Activated B cell treated with CpG ODN at 0.5 μM for 24 hours (primary cell): ENCODE measurements at regions of chr10 and their contacts with region 1.

Region 1: DNA sequence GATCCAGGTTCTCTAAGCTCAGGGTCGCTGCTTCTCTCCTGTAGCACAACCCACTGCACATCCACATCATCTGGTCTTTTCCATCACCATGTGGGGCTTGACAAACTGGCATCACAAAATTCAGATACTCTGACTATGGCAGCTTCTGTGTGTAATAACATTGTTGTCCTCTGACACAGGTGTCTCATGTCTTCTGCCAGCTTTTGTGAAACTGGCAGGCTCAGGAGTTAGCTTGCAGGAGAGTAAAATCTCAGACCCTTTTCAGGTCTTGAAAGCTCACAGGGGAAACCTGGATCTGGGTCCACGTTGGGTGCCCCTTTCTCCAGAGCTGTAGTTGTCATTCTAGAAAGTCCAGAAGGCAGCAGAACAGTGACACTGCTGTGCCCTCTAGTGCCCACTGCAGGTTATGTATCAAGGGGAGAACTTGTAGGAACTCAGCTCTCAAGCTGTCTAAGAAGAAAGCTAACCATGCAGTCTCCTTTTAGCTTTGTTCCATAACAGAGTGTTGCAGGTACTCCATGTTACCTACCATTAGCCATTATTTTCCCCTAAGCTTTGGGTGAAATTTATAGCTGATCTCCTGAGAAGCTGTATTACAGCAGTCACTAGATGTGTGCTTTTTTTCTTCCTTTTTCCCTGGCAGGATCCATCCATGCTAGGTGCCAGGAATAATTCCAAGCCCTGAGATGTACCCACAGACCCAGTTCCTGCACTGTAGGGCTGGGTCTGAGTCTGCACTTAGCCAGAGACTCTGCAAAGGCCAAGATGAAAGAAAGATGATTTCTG is 102.7 kb downstream of the ZNF248 start:
- DNase-seq: no peak
- ATAC-seq: no peak
- H3K4me3 Mint-ChIP-seq: no peak overlapping the region
- H3K27ac Mint-ChIP-seq: no peak overlapping the region
- H3K4me1 Mint-ChIP-seq: no peaks in the 10 kb centered on the region
- H3K27me3 Mint-ChIP-seq: no peaks in the 10 kb centered on the region
- CTCF ChIP-seq: no peak

Region 2: GRCh38 chr10:36888929-36889573 is 865.7 kb before region 1 on chr10:
- CTCF ChIA-PET with region 1: no interaction called
- POLR2A ChIA-PET with region 1: no interaction called
- intact Hi-C with region 1: loop called (anchors 2 kb)
- DNase-seq: no peak
- ATAC-seq: peak; percentile 57
- H3K4me3 Mint-ChIP-seq: no peak overlapping the region
- H3K27ac Mint-ChIP-seq: no peak overlapping the region
- H3K4me1 Mint-ChIP-seq: no peaks in the 10 kb centered on the region
- H3K27me3 Mint-ChIP-seq: no peaks in the 10 kb centered on the region
- CTCF ChIP-seq: no peak

Region 3: DNA sequence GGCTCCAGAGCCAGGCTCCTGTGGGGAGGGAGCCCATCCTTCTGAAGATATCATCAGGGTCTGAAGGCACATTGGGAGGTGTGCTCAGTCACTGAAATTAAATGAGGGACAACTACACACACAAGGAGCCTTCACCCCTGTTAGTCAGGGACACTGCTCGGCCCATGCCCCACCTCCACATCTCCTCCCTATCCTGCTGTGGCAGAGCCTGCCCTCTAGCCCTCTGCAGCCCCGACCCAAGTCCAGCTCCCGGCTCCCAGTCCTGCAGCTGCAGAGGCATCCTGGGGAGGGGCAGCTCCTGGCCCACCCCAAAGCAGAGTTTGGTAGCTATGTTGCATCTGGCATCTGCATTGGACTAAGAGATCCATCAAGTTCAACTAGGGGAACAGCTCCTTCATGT is 33.6 kb before region 1 on chr10:
- CTCF ChIA-PET with region 1: no interaction called
- POLR2A ChIA-PET with region 1: no interaction called
- intact Hi-C with region 1: no loop called
- DNase-seq: no peak
- ATAC-seq: no peak
- H3K4me3 Mint-ChIP-seq: no peak overlapping the region
- H3K27ac Mint-ChIP-seq: no peak overlapping the region
- H3K4me1 Mint-ChIP-seq: no peaks in the 10 kb centered on the region
- H3K27me3 Mint-ChIP-seq: no peaks in the 10 kb centered on the region
- CTCF ChIP-seq: no peak